T-cell (primary cell): ENCODE measurements at regions of chr5 and their contacts with region 1.

Region 1: GRCh38 chr5:132490486-132491367 is at the start of gene IRF1:
- DNase-seq: peak; percentile 93 to 99 (median 98)
- ATAC-seq: peak; percentile 79 to 86 (median 82)
- H3K4me3 ChIP-seq: peak within 1 kb of the TSS; percentile 78 to 90
- H3K4me3 Mint-ChIP-seq: peak within 1 kb of the TSS; percentile 95 to 96 (median 96)
- H3K27ac ChIP-seq: peak within 1 kb of the TSS; percentile 98
- H3K27ac Mint-ChIP-seq: peak within 1 kb of the TSS; percentile 97 to 99
- H3K4me1 ChIP-seq: peaks cover 59 to 67% of the 10 kb centered on the region in 2 experiments
- H3K4me1 Mint-ChIP-seq: peaks cover 68 to 85% (median 76%) of the 10 kb centered on the region in 3 donors
- H3K27me3 ChIP-seq: no peaks in the 10 kb centered on the region
- H3K27me3 Mint-ChIP-seq: no peaks in the 10 kb centered on the region
- total RNA-seq, gene IRF1: 167 to 859 (median 252) TPM

Region 2: DNA sequence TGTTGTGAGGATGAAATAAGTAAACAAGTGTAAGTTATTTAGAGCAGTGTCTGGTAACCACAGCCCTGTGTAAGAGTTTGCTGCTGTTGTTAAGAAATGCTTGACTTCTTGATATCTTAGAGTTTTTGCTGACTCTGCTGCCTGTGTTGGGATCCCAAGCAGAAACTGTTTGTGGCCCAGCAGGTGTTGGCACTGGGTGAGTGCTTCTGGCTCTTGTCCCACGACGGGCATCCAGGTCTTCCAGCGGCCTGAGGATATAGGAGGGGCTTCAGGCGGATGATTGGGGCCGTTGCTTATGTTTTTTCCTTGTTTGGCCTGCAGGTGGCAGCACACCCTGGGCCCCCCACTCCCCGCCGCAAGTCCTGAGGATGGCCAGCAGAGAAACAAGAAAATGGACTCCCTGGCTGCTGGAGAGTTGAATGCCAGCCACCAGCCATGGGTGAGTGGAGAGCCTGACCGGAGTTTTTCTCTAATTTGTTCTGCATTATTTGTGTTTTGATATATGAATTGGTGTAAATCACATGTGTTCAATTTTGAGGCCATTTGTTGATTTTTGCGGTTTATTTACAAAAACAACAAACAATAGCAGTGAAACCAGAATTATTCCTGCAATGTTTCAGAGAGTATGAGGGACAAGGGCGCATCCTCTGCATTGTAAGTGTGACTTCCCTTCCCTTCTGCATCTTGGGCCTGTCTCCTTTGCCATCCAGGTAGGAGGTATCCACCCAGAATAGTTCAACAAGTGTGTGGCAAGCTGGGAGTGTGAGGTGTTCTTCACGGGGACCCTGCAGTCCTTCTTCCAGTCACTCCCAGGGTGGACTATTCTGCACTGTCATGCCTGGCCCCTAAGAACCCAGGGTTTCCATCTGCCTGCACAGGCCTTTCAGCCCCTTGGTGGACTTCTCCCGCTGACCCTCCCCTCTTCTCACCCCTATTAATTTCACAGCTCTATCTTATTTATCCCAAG is 70.9 kb before region 1 on chr5:
- CTCF ChIA-PET with region 1: interaction called, 6 to 10 read pairs
- POLR2A ChIA-PET with region 1: interaction called, 4 to 56 read pairs
- DNase-seq: peak in 31 of 35 experiments; percentile 27 to 82 (median 48)
- ATAC-seq: peak; percentile 65 to 72 (median 67)
- H3K4me3 ChIP-seq: no peak overlapping the region
- H3K4me3 Mint-ChIP-seq: peak overlapping the region; percentile 71 to 75 (median 74)
- H3K27ac ChIP-seq: peak overlapping the region; percentile 94
- H3K27ac Mint-ChIP-seq: peak overlapping the region; percentile 98 to 100
- H3K4me1 ChIP-seq: peaks cover 36 to 80% of the 10 kb centered on the region in 2 experiments
- H3K4me1 Mint-ChIP-seq: peaks cover 97 to 98% (median 98%) of the 10 kb centered on the region in 3 donors
- H3K27me3 ChIP-seq: no peaks in the 10 kb centered on the region
- H3K27me3 Mint-ChIP-seq: no peaks in the 10 kb centered on the region

Region 3: DNA sequence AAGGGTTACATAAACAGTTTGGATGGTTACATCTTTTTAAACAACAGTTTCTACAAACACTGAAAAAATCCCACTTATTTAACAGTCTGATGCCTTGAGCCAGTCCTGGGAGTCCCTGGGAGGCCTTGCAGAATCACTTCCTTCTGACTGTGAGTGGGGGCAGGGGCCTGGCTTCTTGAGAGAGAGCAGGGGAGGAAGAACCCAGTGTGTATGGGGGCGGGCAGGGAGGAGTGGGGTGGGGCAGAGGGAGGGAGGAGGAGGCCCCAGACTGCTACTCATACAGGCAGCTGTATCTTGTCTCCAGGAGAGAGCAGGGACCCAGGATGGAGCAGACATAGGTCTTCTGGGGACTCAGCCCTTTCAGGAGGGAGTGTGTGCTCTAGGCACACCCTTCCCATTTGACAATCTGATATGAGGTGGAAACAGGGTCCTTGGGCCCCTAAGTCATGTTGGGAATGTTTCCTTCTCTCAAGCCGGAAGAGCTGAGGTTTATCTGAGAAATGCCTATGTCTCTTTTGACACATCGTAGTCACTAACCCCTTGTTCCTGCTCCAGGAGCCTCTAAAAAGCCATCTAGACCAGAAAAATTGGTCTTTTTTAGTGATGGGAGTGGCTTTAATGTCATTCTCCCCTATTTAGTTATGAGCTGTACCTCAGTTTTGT is 53.0 kb before region 1 on chr5:
- CTCF ChIA-PET with region 1: interaction called in 1 of 2 experiments, 4 read pairs
- POLR2A ChIA-PET with region 1: interaction called in 1 of 2 experiments, 16 read pairs
- DNase-seq: peak; percentile 40 to 76 (median 61)
- ATAC-seq: peak; percentile 93 to 98 (median 95)
- H3K4me3 ChIP-seq: no peak overlapping the region
- H3K4me3 Mint-ChIP-seq: peak overlapping the region; percentile 37 to 68 (median 47)
- H3K27ac ChIP-seq: peak overlapping the region; percentile 58
- H3K27ac Mint-ChIP-seq: peak overlapping the region; percentile 92 to 93
- H3K4me1 ChIP-seq: peaks cover 36 to 81% of the 10 kb centered on the region in 2 experiments
- H3K4me1 Mint-ChIP-seq: peaks cover 89 to 92% (median 91%) of the 10 kb centered on the region in 3 donors
- H3K27me3 ChIP-seq: no peaks in the 10 kb centered on the region
- H3K27me3 Mint-ChIP-seq: no peaks in the 10 kb centered on the region

Region 4: DNA sequence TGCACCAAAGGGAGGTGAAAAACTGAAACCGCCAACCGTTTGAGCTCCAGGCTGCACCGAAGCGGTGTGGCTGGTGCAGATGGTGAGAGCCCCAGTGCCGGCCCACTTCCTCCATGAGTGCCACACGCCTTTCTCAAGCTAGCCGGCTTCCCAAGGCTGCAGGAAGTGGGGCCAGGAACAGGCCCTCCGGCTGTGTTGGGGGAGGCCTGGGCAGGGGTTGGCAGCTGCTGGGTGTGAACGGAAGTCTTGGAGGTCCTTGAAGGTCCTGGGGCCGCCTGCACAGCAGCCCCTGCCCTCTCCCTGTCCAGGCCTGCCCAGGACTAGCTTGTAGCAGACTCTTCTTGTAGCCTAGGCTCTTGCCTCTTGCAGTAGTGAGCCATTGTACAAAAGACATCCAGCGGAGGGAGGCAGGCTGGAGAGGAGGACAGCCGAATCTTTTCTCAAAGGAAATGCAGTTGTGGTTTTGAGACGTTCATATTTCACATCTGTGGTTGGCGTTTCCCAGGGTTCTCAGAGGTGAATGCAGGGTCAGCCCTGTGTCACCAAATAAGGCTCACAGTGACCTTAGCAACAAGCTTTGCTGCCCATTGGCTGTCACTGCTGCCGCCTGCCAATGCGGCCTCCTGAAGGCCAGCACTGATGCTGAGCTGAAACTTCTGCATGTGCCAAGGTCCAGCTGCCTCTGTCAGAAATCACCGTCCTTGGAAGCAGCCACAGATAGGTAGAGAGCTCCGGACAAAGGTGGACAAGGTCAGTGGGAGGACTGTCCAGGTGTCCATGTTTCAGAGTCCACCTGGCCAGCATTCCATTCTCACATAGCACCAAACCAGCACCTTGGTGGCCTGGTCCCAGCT is 24.1 kb before region 1 on chr5:
- CTCF ChIA-PET with region 1: interaction called, 3 to 18 read pairs
- POLR2A ChIA-PET with region 1: interaction called, 15 to 111 read pairs
- DNase-seq: peak; percentile 56 to 85 (median 74)
- ATAC-seq: peak; percentile 58 to 84 (median 81)
- H3K4me3 ChIP-seq: peak overlapping the region; percentile 2 to 32
- H3K4me3 Mint-ChIP-seq: peak overlapping the region; percentile 65 to 77 (median 66)
- H3K27ac ChIP-seq: peak overlapping the region; percentile 95
- H3K27ac Mint-ChIP-seq: peak overlapping the region; percentile 97 to 100
- H3K4me1 ChIP-seq: peaks cover 56 to 91% of the 10 kb centered on the region in 2 experiments
- H3K4me1 Mint-ChIP-seq: peaks cover 94 to 99% (median 96%) of the 10 kb centered on the region in 3 donors
- H3K27me3 ChIP-seq: no peaks in the 10 kb centered on the region
- H3K27me3 Mint-ChIP-seq: no peaks in the 10 kb centered on the region

Region 5: GRCh38 chr5:132540764-132541163 is 50.0 kb after region 1 on chr5:
- CTCF ChIA-PET with region 1: no interaction called
- POLR2A ChIA-PET with region 1: no interaction called
- DNase-seq: no peak
- ATAC-seq: no peak
- H3K4me3 ChIP-seq: no peak overlapping the region
- H3K4me3 Mint-ChIP-seq: no peak overlapping the region
- H3K27ac ChIP-seq: no peak overlapping the region
- H3K27ac Mint-ChIP-seq: no peak overlapping the region
- H3K4me1 ChIP-seq: no peaks in the 10 kb centered on the region
- H3K4me1 Mint-ChIP-seq: no peaks in the 10 kb centered on the region
- H3K27me3 ChIP-seq: no peaks in the 10 kb centered on the region
- H3K27me3 Mint-ChIP-seq: peaks cover 2 to 9% of the 10 kb centered on the region in 2 donors

Region 6: GRCh38 chr5:132629230-132629944 is 138.7 kb after region 1 on chr5:
- CTCF ChIA-PET with region 1: no interaction called
- POLR2A ChIA-PET with region 1: no interaction called
- DNase-seq: no peak
- ATAC-seq: peak in 1 of 4 experiments; percentile 53
- H3K4me3 ChIP-seq: no peak overlapping the region
- H3K4me3 Mint-ChIP-seq: no peak overlapping the region
- H3K27ac ChIP-seq: peak overlapping the region; percentile 20
- H3K27ac Mint-ChIP-seq: peak overlapping the region; percentile 34 to 68
- H3K4me1 ChIP-seq: no peaks in the 10 kb centered on the region
- H3K4me1 Mint-ChIP-seq: peaks cover 0 to 12% (median 7%) of the 10 kb centered on the region in 3 donors
- H3K27me3 ChIP-seq: no peaks in the 10 kb centered on the region
- H3K27me3 Mint-ChIP-seq: no peaks in the 10 kb centered on the region

Region 7: GRCh38 chr5:133225671-133226152 is 735.0 kb after region 1 on chr5:
- CTCF ChIA-PET with region 1: no interaction called
- POLR2A ChIA-PET with region 1: no interaction called
- DNase-seq: no peak
- ATAC-seq: no peak
- H3K4me3 ChIP-seq: no peak overlapping the region
- H3K4me3 Mint-ChIP-seq: no peak overlapping the region
- H3K27ac ChIP-seq: no peak overlapping the region
- H3K27ac Mint-ChIP-seq: no peak overlapping the region
- H3K4me1 ChIP-seq: no peaks in the 10 kb centered on the region
- H3K4me1 Mint-ChIP-seq: no peaks in the 10 kb centered on the region
- H3K27me3 ChIP-seq: peaks cover 0 to 6% of the 10 kb centered on the region in 2 experiments
- H3K27me3 Mint-ChIP-seq: no peaks in the 10 kb centered on the region